ENCODE measurements at regions of chr4 and their contacts with region 1.

Region 1: GRCh38 chr4:110193822-110194761 is 4.3 kb downstream of the ELOVL6 start:
- DNase-seq: peak; percentile 77
- H3K4me3 Mint-ChIP-seq: peak overlapping the region; percentile 50
- H3K27ac Mint-ChIP-seq: peak overlapping the region; percentile 85
- H3K4me1 Mint-ChIP-seq: peaks cover 52% of the 10 kb centered on the region
- H3K27me3 Mint-ChIP-seq: peaks cover 2% of the 10 kb centered on the region

Region 2: DNA sequence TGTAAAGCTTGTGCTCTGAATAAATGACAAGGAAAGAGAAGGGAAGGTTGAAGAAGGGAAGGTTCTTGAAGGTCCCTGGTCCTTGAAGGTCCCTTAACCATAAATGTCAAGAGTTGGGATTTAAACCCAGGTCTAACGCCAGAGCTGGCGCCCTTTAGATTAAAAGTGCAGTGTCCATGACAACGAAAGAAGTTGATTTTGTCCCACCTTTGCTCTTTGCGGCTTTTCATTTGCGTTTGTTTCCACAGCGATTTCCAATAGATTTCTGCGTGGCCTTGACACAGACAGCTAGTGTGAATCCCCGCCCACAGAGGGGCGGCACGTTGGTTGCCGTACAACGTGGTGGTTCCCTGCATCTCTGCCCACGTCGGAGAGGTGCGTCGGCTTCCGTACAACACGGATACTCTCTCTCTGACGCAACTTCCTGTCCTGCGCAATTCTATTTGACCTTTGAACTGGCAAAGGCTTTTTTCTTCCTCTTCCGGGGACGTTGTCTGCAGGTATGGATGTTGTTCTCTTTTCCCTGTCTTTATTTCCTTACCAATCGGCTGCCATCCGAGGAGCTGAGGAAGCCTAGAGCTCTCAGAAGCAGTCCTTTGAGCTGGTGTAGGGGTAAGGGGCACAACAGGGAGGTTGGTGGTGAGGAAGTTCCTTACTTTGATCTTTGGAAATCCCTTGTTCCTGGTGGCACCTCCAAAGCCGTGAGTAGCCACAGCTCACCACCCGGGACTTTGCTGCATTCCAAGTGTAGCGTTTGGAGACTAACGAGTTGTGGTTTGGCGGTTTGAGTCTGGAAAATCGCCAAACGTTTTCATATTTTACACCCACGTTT is 1573.8 kb before region 1 on chr4 and contains the start of gene RPL34:
- intact Hi-C with region 1: loop called (anchors 10 kb)
- DNase-seq: peak; percentile 96
- H3K4me3 Mint-ChIP-seq: peak within 1 kb of the TSS; percentile 98
- H3K27ac Mint-ChIP-seq: peak within 1 kb of the TSS; percentile 97
- H3K4me1 Mint-ChIP-seq: peaks cover 43% of the 10 kb centered on the region
- H3K27me3 Mint-ChIP-seq: no peaks in the 10 kb centered on the region
- total RNA-seq, gene RPL34: 1,258 and 1,304 TPM in 2 replicates

Region 3: GRCh38 chr4:109433205-109434006 is 760.7 kb before region 1 on chr4 and contains the start of gene SEC24B:
- intact Hi-C with region 1: loop called (anchors 2 kb)
- DNase-seq: peak; percentile 86
- H3K4me3 Mint-ChIP-seq: peak within 1 kb of the TSS; percentile 87
- H3K27ac Mint-ChIP-seq: peak within 1 kb of the TSS; percentile 79
- H3K4me1 Mint-ChIP-seq: peaks cover 57% of the 10 kb centered on the region
- H3K27me3 Mint-ChIP-seq: no peaks in the 10 kb centered on the region
- total RNA-seq, gene SEC24B: 32.5 and 34.0 TPM in 2 replicates

Region 4: GRCh38 chr4:110005461-110006056 is 188.5 kb before region 1 on chr4:
- intact Hi-C with region 1: loop called (anchors 1 kb)
- DNase-seq: no peak
- H3K4me3 Mint-ChIP-seq: no peak overlapping the region
- H3K27ac Mint-ChIP-seq: no peak overlapping the region
- H3K4me1 Mint-ChIP-seq: peaks cover 23% of the 10 kb centered on the region
- H3K27me3 Mint-ChIP-seq: peaks cover 2% of the 10 kb centered on the region

Region 5: GRCh38 chr4:110055158-110055768 is 138.8 kb before region 1 on chr4:
- intact Hi-C with region 1: loop called (anchors 1 kb)
- DNase-seq: peak; percentile 54
- H3K4me3 Mint-ChIP-seq: peak overlapping the region; percentile 66
- H3K27ac Mint-ChIP-seq: peak overlapping the region; percentile 61
- H3K4me1 Mint-ChIP-seq: peaks cover 83% of the 10 kb centered on the region
- H3K27me3 Mint-ChIP-seq: no peaks in the 10 kb centered on the region

Region 6: GRCh38 chr4:110104661-110105060 is 89.4 kb before region 1 on chr4:
- intact Hi-C with region 1: no loop called
- DNase-seq: no peak
- H3K4me3 Mint-ChIP-seq: no peak overlapping the region
- H3K27ac Mint-ChIP-seq: no peak overlapping the region
- H3K4me1 Mint-ChIP-seq: peaks cover 22% of the 10 kb centered on the region
- H3K27me3 Mint-ChIP-seq: no peaks in the 10 kb centered on the region

Region 7: DNA sequence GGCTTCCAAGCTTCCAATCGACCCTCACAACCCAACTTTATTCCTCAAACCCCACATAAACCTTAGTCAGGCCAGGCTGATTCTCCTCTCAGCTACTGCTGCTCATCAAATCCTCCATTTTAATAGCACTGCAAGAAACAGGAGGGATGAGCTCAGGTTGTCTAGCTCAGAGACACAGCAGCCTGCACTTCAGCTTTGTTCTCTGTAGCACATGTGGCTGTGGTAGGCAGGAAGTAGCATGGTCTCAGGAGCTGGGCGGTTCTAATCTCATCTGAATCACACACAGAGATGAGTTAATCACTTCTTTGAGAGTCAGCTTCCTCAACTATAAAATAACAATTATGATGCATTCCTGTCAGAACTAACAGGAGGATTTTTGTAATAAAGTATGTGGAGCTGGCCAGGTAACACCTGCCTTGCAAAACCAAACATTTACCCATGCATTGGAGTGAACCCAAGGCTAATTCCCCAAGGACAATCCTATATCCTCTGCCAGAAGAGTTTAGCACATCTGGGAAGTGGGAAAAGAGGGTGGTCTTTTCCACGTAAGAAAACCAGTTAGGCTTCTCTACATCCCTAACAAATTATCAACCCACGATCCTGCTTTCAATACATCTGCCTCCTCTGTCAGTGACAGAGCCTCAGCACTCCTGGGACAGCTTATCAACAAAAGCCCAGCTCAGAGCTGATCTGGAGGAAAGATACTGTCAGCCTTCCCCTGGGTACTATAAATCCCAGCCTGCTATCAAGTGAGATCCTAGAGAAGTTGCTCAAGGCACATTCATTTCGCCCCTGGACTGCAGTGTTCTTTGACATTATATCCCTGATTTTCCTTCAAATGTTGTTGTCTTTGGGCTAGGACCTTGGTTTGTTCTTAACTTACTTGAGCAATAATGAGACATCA is 28.5 kb before region 1 on chr4:
- intact Hi-C with region 1: loop called (anchors 1 kb)
- DNase-seq: peak; percentile 57
- H3K4me3 Mint-ChIP-seq: peak overlapping the region; percentile 50
- H3K27ac Mint-ChIP-seq: peak overlapping the region; percentile 99
- H3K4me1 Mint-ChIP-seq: peaks cover 28% of the 10 kb centered on the region
- H3K27me3 Mint-ChIP-seq: no peaks in the 10 kb centered on the region

Region 8: GRCh38 chr4:110287130-110287529 is 93.0 kb after region 1 on chr4:
- intact Hi-C with region 1: loop called (anchors 1 kb)
- DNase-seq: no peak
- H3K4me3 Mint-ChIP-seq: peak overlapping the region; percentile 31
- H3K27ac Mint-ChIP-seq: peak overlapping the region; percentile 74
- H3K4me1 Mint-ChIP-seq: peaks cover 15% of the 10 kb centered on the region
- H3K27me3 Mint-ChIP-seq: peaks cover 13% of the 10 kb centered on the region